MCF 10A (cell line): ENCODE measurements at regions of chr2 and their contacts with region 1.

Region 1: DNA sequence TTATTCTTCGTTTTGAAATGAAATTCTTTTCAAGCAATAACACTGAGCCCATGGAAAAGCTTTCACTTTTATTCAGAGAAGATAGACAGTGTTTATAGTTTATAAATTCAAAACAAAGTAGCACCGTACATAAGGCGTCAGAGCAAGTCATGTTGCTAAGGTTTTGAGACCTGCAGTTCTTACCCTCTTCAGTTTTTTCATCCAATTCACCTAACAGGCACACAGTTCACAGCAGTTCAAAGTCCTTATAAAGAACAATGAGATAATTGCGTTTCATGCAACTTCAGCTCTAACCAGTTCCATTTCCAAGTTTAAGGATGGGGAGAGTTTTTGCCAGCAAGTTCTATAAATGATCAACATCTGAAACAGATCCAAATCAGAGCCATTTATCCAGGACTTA is 96.7 kb downstream of the ARHGAP15 start:
- DNase-seq: no peak
- H3K4me3 Mint-ChIP-seq: no peak overlapping the region
- H3K27ac Mint-ChIP-seq: no peak overlapping the region
- H3K4me1 Mint-ChIP-seq: no peaks in the 10 kb centered on the region
- H3K27me3 Mint-ChIP-seq: no peaks in the 10 kb centered on the region
- CTCF ChIP-seq: no peak

Region 2: DNA sequence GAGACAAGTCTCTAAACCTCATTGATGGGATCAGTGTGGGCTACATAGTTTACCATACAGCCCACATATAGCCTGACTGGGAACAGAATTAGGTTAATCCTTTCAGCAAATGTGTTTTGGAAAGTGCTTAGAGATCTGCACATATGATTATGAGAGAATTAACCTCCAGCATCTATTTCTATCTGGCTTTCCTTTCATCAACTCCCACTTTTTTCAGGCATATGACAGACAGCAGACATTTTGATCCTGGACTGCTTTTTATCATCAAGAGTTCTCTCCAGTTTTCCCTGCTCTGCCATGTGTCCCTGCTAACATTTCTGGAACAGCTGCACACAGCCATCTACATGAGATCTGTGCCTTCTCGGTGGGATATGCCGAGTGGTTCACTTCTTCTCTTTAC is 955.6 kb before region 1 on chr2:
- CTCF ChIA-PET with region 1: no interaction called
- POLR2A ChIA-PET with region 1: no interaction called
- intact Hi-C with region 1: no loop called
- DNase-seq: no peak
- H3K4me3 Mint-ChIP-seq: no peak overlapping the region
- H3K27ac Mint-ChIP-seq: no peak overlapping the region
- H3K4me1 Mint-ChIP-seq: no peaks in the 10 kb centered on the region
- H3K27me3 Mint-ChIP-seq: peaks cover 37% of the 10 kb centered on the region
- CTCF ChIP-seq: no peak

Region 3: DNA sequence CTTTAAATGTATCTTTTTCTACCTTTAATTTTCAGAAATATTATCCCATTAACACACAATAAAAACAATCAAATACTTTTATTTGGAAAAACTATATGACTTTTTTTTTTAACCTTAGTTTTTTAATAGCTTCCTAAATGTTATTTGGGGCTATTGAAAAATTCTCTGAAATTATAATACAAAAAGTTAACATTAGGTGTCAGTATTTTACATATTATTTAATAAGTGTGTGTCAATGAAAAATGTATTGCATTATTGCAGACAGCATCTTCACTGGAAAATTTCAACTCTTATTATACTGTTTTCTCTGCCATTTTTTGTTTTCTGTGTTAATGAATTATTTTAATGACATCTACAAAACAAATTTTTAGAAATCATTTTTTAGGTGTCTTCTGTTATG is 147.8 kb before region 1 on chr2:
- CTCF ChIA-PET with region 1: interaction called, 5 read pairs
- POLR2A ChIA-PET with region 1: no interaction called
- intact Hi-C with region 1: loop called (anchors 2 kb)
- DNase-seq: no peak
- H3K4me3 Mint-ChIP-seq: no peak overlapping the region
- H3K27ac Mint-ChIP-seq: no peak overlapping the region
- H3K4me1 Mint-ChIP-seq: peaks cover 6% of the 10 kb centered on the region
- H3K27me3 Mint-ChIP-seq: no peaks in the 10 kb centered on the region
- CTCF ChIP-seq: peak; percentile 18

Region 4: DNA sequence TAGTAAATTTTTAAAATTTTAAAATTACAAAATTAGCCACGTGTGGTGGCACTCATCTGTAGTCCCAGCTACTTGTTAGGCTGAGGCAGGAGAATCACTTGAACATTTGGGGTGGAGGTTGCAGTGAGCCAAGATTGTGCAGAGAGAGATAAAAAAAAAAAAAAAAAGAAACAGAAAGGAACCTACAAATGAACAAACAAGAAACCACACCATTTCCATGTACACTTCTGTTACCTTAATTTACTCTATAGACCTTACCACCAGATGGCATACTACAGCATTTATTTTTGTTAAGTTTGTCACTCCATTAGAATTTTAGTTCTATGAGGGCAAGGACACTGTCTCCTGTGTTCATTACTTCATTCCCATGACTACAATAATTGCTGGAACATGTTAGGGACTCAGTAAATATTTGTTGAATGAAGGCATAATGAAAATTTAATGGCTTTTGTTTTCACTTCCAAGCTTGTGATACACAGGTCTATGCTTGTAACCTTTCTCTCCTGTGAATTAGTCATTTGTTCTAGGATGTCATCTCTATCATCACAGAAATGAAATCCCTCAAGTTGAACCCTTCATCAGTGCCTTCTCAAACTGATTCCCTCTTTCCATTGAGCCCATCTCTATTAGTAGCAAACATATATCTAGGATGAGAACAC is 20.7 kb before region 1 on chr2:
- CTCF ChIA-PET with region 1: interaction called, 50 read pairs
- POLR2A ChIA-PET with region 1: no interaction called
- intact Hi-C with region 1: no loop called
- DNase-seq: peak; percentile 9
- H3K4me3 Mint-ChIP-seq: no peak overlapping the region
- H3K27ac Mint-ChIP-seq: no peak overlapping the region
- H3K4me1 Mint-ChIP-seq: peaks cover 5% of the 10 kb centered on the region
- H3K27me3 Mint-ChIP-seq: no peaks in the 10 kb centered on the region
- CTCF ChIP-seq: peak; percentile 43